IMR-90 (cell line): ENCODE measurements at regions of chr2 and their contacts with region 1.

Region 1: DNA sequence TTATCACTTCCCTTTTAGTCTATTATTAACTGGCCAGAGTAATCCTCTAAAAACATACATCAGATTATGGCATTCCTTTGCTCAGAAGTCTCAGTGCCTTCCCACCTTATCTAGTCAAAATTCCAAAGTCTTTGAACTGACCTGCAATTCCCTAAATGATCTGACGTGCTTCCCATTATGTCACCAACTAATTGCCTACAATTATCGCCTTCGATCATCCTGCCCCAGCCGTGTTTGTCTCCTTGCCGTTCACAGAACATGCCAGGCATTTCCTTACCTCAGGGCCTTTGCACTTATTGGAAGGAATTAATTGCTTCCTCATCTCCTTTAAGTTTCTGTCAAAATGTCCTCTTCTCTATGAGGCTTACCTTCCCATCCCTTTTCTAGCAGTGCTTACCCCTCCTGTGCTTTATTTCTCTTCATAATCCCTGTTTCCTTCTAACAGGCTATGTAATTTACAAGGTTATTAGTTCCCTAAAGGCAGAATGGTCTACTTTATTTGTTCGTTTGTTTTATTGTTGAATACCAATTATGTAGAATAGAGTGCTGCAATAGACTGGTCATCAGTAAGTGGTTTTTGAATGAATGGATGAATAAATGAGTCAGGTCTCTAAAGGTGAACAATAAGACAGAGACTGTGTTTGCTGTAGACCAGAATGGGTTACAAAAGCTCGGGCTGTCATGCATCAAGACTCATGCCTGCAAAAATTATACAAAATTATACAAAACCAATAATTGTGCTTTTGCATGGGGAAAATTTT is 332.2 kb downstream of the IRS1 start:
- DNase-seq: no peak
- ATAC-seq: no peak
- H3K4me3 ChIP-seq: no peak overlapping the region
- H3K27ac ChIP-seq: no peak overlapping the region
- H3K4me1 ChIP-seq: peaks cover 2% of the 10 kb centered on the region; the same call in 1 of the 2 replicates
- H3K27me3 ChIP-seq: no peaks in the 10 kb centered on the region
- CTCF ChIP-seq: no peak
- POLR2A ChIP-seq: no peak
- RAD21 ChIP-seq: no peak

Region 2: DNA sequence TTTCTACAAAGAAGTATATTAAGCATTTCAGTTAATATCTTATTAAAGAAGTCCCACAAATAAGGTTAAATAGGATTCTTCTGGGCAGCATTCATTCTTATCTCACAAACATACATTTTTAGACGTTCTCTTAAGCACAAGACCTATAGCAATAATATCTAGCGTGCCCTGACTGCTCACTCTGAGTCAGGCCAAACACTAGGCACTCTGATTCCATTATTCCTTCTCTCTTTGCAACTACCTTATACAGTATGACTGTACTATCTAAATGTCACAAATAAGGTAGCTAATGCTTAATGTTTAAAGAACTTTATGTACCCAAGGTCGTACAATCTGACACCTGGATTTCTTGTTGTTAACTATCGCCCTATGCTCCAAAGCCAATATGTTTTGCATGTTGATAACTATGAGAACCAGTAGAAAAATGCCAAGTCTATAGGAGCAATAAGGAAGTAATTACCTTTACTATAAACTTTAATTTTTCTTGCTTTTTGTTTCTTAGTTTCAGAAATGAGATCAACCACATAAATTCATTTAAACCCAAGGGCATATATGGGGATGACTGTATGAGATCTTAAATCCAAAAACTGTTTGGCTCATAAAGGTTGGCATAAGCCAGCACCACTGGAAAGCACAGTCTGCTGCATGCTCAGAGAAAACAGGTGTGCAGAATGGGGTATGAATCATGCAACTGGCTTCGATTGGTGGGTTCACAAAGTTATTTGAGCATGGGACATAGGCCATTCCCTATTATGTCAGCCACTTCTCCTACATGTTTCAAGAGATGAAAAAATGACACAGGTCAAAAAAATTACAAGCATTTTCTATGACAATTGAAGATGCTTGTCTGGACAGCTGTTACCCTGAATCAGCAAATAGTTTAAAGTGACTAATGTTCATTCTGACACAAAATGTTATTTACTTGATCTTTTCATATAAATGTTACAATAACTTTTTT is 19.8 kb before region 1 on chr2:
- CTCF ChIA-PET with region 1: no interaction called
- POLR2A ChIA-PET with region 1: no interaction called
- dilution Hi-C with region 1: no loop called
- in situ Hi-C with region 1: no loop called
- intact Hi-C with region 1: loop called (anchors 2 kb)
- DNase-seq: peak; percentile 52
- ATAC-seq: peak; percentile 24
- H3K4me3 ChIP-seq: no peak overlapping the region
- H3K27ac ChIP-seq: peak overlapping the region; percentile 50
- H3K4me1 ChIP-seq: peaks cover 7% of the 10 kb centered on the region
- H3K27me3 ChIP-seq: no peaks in the 10 kb centered on the region
- CTCF ChIP-seq: no peak
- POLR2A ChIP-seq: no peak
- RAD21 ChIP-seq: no peak